Left ventricle myocardium inferior (tissue), 1 donor: ENCODE measurements at regions of chrX and their contacts with region 1.

Region 1: GRCh38 chrX:43939187-43939926 is 33.8 kb downstream of the NDP start:
- DNase-seq: no peak
- H3K4me3 ChIP-seq: no peak overlapping the region
- H3K27ac ChIP-seq: no peak overlapping the region
- H3K4me1 ChIP-seq: no peaks in the 10 kb centered on the region
- H3K27me3 ChIP-seq: no peaks in the 10 kb centered on the region
- CTCF ChIP-seq: peak; percentile 47

Region 2: GRCh38 chrX:43836435-43837184 is 102.7 kb before region 1 on chrX:
- intact Hi-C with region 1: loop called (anchors 10 kb)
- DNase-seq: no peak
- H3K4me3 ChIP-seq: no peak overlapping the region
- H3K27ac ChIP-seq: no peak overlapping the region
- H3K4me1 ChIP-seq: peaks cover 7% of the 10 kb centered on the region
- H3K27me3 ChIP-seq: no peaks in the 10 kb centered on the region
- CTCF ChIP-seq: peak; percentile 69